GM23248 (cell line): ENCODE measurements at regions of chr18 and their contacts with region 1.

Region 1: GRCh38 chr18:31206787-31207381 is 44.2 kb upstream of the DSC1 start:
- DNase-seq: no peak
- H3K4me3 ChIP-seq: no peak overlapping the region
- H3K27ac ChIP-seq: no peak overlapping the region
- H3K4me1 ChIP-seq: no peaks in the 10 kb centered on the region
- H3K27me3 ChIP-seq: no peaks in the 10 kb centered on the region

Region 2: GRCh38 chr18:30945761-30946160 is 261.1 kb before region 1 on chr18:
- in situ Hi-C with region 1: no loop called
- DNase-seq: no peak
- H3K4me3 ChIP-seq: no peak overlapping the region
- H3K27ac ChIP-seq: no peak overlapping the region
- H3K4me1 ChIP-seq: no peaks in the 10 kb centered on the region
- H3K27me3 ChIP-seq: no peaks in the 10 kb centered on the region

Region 3: DNA sequence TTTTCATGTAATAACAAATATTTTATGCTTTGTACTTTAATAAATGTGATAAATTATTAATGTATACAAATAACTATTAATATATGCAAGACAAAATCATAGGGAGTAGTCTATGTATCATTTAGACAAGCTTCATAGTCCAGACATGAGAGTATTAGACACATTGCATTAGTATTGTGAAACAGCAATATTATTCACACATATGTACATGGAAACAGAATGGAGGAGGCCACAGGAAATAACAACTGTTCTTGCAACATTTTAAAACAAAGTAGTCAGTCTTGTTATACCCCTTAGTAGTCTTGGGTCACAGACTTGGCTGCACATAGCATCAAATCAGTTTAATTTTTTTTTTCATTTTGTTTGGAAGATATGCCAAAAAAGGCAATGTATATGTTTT is 60.1 kb before region 1 on chr18:
- in situ Hi-C with region 1: loop called (anchors 10 kb)
- DNase-seq: no peak
- H3K4me3 ChIP-seq: no peak overlapping the region
- H3K27ac ChIP-seq: no peak overlapping the region
- H3K4me1 ChIP-seq: no peaks in the 10 kb centered on the region
- H3K27me3 ChIP-seq: no peaks in the 10 kb centered on the region